ENCODE measurements at regions of chr19 and their contacts with region 1.

Region 1: GRCh38 chr19:38899447-38900219 is at the starts of genes NFKBIB and SIRT2:
- DNase-seq: peak; percentile 96 to 98
- H3K4me3 ChIP-seq: peak within 1 kb of the TSS; percentile 74 to 90 (median 84)
- H3K27ac ChIP-seq: peak within 1 kb of the TSS; percentile 80
- H3K4me1 ChIP-seq: peaks cover 0 to 9% (median 3%) of the 10 kb centered on the region in 4 experiments; a peak in 4 of 7 replicates
- H3K27me3 ChIP-seq: peaks cover 0 to 9% (median 4%) of the 10 kb centered on the region in 4 experiments; a peak in 3 of 7 replicates
- CTCF ChIP-seq: peak in 1 of 3 experiments; percentile 1; a peak in 1 of 4 replicates
- EP300 ChIP-seq: no peak; a peak in 1 of 3 replicates
- POLR2A ChIP-seq: peak in 1 of 2 experiments; percentile 81; a peak in 2 of 3 replicates
- RAD21 ChIP-seq: no peak
- total RNA-seq, gene NFKBIB: 36.3 and 37.3 TPM in 2 replicates
- total RNA-seq, gene SIRT2: 6.1 and 6.5 TPM in 2 replicates

Region 2: GRCh38 chr19:38869856-38870607 is 29.6 kb before region 1 on chr19:
- CTCF ChIA-PET with region 1: interaction called, 4 read pairs
- POLR2A ChIA-PET with region 1: interaction called, 11 read pairs
- DNase-seq: peak in 1 of 2 experiments; percentile 91
- H3K4me3 ChIP-seq: peak overlapping the region; percentile 38 to 63 (median 55)
- H3K27ac ChIP-seq: no peak overlapping the region
- H3K4me1 ChIP-seq: peaks cover 0 to 7% (median 4%) of the 10 kb centered on the region in 4 experiments; a peak in 5 of 7 replicates
- H3K27me3 ChIP-seq: peaks cover 0 to 11% (median 5%) of the 10 kb centered on the region in 4 experiments; a peak in 5 of 7 replicates
- CTCF ChIP-seq: peak; percentile 63 to 80 (median 73)
- EP300 ChIP-seq: peak in 1 of 2 experiments; percentile 66; a peak in 1 of 3 replicates
- POLR2A ChIP-seq: no peak
- RAD21 ChIP-seq: peak; percentile 22 to 57

Measured in H1 (cell line).